ENCODE measurements at regions of chr5 and their contacts with region 1.

Region 1: DNA sequence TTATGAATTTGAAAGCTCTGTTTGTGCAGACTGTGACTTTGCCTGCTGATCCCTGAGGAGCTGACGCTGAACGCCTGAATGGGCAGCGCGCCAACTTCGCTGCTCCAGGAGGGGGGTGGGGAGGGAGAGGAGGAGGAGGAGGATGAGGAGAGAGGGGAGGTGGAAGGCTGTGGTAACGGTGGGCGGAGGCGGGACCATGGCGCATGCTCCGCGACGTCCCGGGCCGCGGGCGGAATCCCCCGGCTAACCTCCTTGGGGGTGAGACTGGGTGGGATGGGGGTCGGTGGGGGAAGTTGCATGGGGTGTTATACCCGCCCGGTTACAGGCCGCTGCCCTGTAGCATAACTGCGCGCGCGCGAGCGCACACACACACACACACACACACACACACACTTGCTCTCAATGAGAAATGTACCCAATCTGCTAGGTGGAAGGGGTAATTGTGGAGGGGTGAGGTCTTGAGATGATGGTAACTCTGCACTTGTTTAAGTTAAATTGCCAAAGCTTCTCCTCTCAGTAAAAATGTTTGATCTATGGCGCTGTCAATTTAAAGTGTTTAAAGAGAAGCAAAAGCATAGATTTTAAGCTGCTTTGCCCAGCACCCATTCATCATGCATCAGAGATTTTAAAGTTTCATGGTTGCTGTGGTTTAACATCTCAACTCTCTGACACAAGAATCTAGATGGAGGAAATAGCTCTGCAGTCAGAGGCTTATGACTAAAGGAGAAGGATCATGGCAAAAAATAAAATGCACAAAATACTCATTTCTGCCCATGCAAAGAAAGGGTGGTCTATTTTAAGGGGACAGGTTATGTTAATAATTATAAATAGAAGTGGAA is 76.6 kb upstream of the TBCA start:
- ATAC-seq: peak in 6 of 8 experiments; percentile 17 to 62 (median 26)
- H3K4me3 ChIP-seq: peak overlapping the region; percentile 9 to 37 (median 27)
- H3K27ac ChIP-seq: no peak overlapping the region
- H3K4me1 ChIP-seq: peaks cover 21 to 24% of the 10 kb centered on the region in 2 donors

Region 2: GRCh38 chr5:77972469-77973252 is 119.9 kb after region 1 on chr5:
- in situ Hi-C with region 1: loop called in 2 of 9 experiments (anchors 25 kb)
- ATAC-seq: peak in 6 of 8 experiments; percentile 39 to 73 (median 71)
- H3K4me3 ChIP-seq: peak overlapping the region; percentile 13 to 31 (median 23)
- H3K27ac ChIP-seq: peak overlapping the region in 1 of 2 donors; percentile 38
- H3K4me1 ChIP-seq: peaks cover 14 to 15% of the 10 kb centered on the region in 2 donors

Region 3: GRCh38 chr5:77993855-77994318 is 141.2 kb after region 1 on chr5:
- in situ Hi-C with region 1: loop called in 1 of 9 experiments (anchors 25 kb)
- ATAC-seq: peak in 5 of 8 experiments; percentile 72 to 84 (median 79)
- H3K4me3 ChIP-seq: peak overlapping the region in 1 of 5 donors; percentile 10
- H3K27ac ChIP-seq: no peak overlapping the region
- H3K4me1 ChIP-seq: peaks cover 50% of the 10 kb centered on the region in 2 donors